Activated naive CD4-positive, alpha-beta T cell treated with anti-CD3 and anti-CD28 coated beads for 36 hours (primary cell): ENCODE measurements at regions of chr6 and their contacts with region 1.

Region 1: DNA sequence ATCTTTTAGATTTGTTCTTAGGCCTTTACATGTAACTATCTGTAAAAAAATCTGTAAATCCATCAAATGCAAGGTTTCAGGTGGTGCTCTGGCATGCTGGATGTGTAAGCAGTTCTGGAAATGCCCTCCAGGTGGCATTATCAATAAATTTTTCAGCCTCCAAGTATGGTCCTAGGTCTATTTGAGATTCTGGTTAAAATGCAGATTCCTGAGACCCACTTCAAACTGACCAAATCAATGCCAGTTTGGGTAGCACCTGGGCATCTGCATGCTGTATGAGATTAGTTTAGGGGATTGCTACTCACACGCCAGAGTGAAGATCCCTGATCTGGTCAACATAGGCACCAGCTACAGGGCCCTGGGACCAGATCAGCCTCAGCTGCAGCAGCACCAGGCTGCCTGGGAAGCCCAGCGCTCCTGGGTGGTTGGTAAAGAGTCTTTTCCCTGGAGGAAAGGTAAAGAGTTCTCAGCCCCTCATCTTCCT is 507.3 kb upstream of the CITED2 start:
- DNase-seq: peak; percentile 46
- H3K4me3 Mint-ChIP-seq: no peak overlapping the region
- H3K27ac Mint-ChIP-seq: no peak overlapping the region
- H3K4me1 Mint-ChIP-seq: peaks cover 4% of the 10 kb centered on the region
- H3K27me3 Mint-ChIP-seq: no peaks in the 10 kb centered on the region

Region 2: DNA sequence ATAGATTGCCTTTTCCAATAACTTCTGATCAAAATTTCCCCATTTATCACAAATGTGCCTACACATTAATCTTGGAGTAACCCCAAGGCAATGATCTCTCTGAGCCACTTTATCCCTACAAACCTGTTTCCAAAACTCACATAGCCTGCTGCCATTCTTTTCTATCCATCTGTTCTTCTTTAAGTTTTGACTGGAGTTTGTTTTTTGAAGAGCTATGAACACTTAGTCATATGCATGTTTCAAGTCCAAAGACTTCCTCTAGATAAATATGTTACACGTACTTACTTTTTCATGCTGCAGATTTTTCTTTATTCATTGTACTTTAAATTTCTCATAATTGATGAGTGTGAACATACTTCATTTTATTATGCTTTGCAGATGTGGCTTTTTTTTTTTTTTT is 18.4 kb before region 1 on chr6:
- CTCF ChIA-PET with region 1: no interaction called
- intact Hi-C with region 1: no loop called
- DNase-seq: no peak
- H3K4me3 Mint-ChIP-seq: no peak overlapping the region
- H3K27ac Mint-ChIP-seq: no peak overlapping the region
- H3K4me1 Mint-ChIP-seq: no peaks in the 10 kb centered on the region
- H3K27me3 Mint-ChIP-seq: peaks cover 2% of the 10 kb centered on the region

Region 3: GRCh38 chr6:139940741-139941729 is 59.3 kb after region 1 on chr6:
- CTCF ChIA-PET with region 1: no interaction called
- intact Hi-C with region 1: no loop called
- DNase-seq: no peak
- H3K4me3 Mint-ChIP-seq: no peak overlapping the region
- H3K27ac Mint-ChIP-seq: no peak overlapping the region
- H3K4me1 Mint-ChIP-seq: no peaks in the 10 kb centered on the region
- H3K27me3 Mint-ChIP-seq: peaks cover 3% of the 10 kb centered on the region

Region 4: DNA sequence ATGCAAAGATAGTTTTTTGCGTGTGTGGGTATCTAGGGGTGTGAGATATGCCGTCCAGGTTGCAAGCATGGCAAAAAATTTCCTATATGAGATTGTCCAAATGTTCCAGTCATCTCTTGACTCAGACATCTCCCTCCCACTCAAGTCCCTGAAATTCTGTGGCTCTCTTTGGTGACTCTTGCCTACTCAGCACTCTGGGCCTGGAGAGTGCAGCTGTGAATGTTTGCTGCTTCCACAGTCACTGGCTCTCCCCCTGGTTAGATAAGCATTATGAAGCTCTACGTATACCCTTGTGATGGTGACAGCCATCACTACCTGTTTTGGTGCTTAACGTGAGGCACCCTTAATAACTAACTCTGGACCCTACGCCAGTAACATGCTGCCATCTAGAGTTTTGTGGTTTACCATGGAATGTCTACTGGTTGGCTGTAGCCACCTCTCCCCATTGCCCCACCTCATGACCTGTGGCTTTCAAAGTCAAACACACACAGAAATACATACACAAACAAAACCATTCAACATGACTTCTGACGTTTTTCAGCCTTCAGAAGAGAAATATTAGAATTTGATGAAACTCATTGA is 114.6 kb after region 1 on chr6:
- CTCF ChIA-PET with region 1: no interaction called
- intact Hi-C with region 1: loop called (anchors 1 kb)
- DNase-seq: peak; percentile 8
- H3K4me3 Mint-ChIP-seq: no peak overlapping the region
- H3K27ac Mint-ChIP-seq: no peak overlapping the region
- H3K4me1 Mint-ChIP-seq: no peaks in the 10 kb centered on the region
- H3K27me3 Mint-ChIP-seq: no peaks in the 10 kb centered on the region

Region 5: GRCh38 chr6:140441256-140441655 is 559.5 kb after region 1 on chr6:
- CTCF ChIA-PET with region 1: no interaction called
- intact Hi-C with region 1: loop called (anchors 5 kb)
- DNase-seq: peak; percentile 27
- H3K4me3 Mint-ChIP-seq: no peak overlapping the region
- H3K27ac Mint-ChIP-seq: no peak overlapping the region
- H3K4me1 Mint-ChIP-seq: no peaks in the 10 kb centered on the region
- H3K27me3 Mint-ChIP-seq: peaks cover 4% of the 10 kb centered on the region